Endothelial cell of umbilical vein (primary cell): ENCODE measurements at regions of chr2 and their contacts with region 1.

Region 1: DNA sequence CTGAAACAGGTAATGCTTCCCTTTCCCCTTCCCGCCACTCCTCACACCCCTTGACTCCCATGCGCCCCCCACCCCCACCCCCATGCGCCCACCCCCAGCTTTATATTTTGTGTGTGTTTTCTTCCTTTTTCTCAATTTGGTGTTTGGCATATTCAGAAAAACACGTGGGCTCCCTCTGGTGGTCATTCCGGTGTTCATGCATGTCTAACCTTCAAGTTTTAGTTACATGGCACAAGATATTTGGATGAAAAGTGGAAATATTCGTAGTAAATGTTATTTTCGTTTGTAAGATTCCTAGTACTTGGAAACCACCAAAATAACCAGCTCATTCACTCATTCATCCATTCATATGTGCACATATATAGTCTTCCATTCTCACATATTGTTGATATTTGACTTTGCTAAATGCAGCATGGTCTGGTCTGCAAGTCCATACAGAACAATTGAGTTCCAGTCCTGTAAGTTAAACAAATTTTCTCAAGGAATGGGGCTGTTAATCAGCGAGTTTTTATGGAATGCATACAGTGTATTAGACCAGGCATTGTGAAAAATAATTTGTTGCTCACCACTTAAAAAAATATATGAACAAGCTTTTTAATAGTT is 143.6 kb upstream of the MAP3K20 start:
- DNase-seq: peak; percentile 81
- H3K4me3 ChIP-seq: peak overlapping the region in 1 of 3 experiments; percentile 25
- H3K27ac ChIP-seq: peak overlapping the region; percentile 94
- H3K4me1 ChIP-seq: peaks cover 39% of the 10 kb centered on the region
- H3K27me3 ChIP-seq: no peaks in the 10 kb centered on the region
- CTCF ChIP-seq: peak; percentile 39 to 62
- POLR2A ChIP-seq: no peak

Region 2: GRCh38 chr2:172555522-172556283 is 376.3 kb before region 1 on chr2 and contains the start of gene PDK1:
- CTCF ChIA-PET with region 1: no interaction called
- POLR2A ChIA-PET with region 1: no interaction called
- dilution Hi-C with region 1: no loop called
- intact Hi-C with region 1: loop called (anchors 5 kb)
- DNase-seq: peak; percentile 90
- H3K4me3 ChIP-seq: peak within 1 kb of the TSS; percentile 11 to 53 (median 51)
- H3K27ac ChIP-seq: peak within 1 kb of the TSS; percentile 74
- H3K4me1 ChIP-seq: peaks cover 27% of the 10 kb centered on the region
- H3K27me3 ChIP-seq: no peaks in the 10 kb centered on the region
- CTCF ChIP-seq: no peak
- POLR2A ChIP-seq: peak; percentile 95
- total RNA-seq, gene PDK1: 7.7 and 16.9 TPM in 2 replicates

Region 3: GRCh38 chr2:172813314-172813888 is 118.6 kb before region 1 on chr2:
- CTCF ChIA-PET with region 1: interaction called, 280 read pairs
- POLR2A ChIA-PET with region 1: interaction called, 10 read pairs
- dilution Hi-C with region 1: no loop called
- intact Hi-C with region 1: loop called (anchors 1 kb)
- DNase-seq: peak; percentile 68
- H3K4me3 ChIP-seq: no peak overlapping the region
- H3K27ac ChIP-seq: no peak overlapping the region
- H3K4me1 ChIP-seq: no peaks in the 10 kb centered on the region
- H3K27me3 ChIP-seq: peaks cover 0 to 2% of the 10 kb centered on the region in 2 experiments
- CTCF ChIP-seq: peak in 1 of 2 donors; percentile 37
- POLR2A ChIP-seq: no peak

Region 4: DNA sequence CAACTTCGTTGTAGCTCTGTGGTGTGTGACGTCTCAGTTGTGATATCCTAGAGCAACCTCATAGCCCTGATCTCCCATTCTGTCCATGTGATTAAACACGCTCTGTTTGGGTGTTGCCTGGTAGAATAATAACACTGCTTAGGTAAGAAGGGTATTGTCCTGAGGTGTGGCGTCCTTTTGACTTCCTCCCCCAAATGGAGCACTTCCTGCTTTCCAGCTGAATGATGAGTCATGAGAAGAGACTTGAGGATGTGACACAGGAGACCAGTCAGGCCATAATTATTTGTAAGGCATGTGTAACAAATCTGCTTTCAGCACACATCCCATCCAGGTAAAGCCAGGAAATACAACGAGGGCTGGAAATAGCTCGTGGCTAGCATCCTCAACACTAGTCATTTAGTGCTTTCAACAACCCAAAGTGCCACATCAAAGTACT is 95.6 kb before region 1 on chr2:
- CTCF ChIA-PET with region 1: interaction called, 7 read pairs
- POLR2A ChIA-PET with region 1: no interaction called
- dilution Hi-C with region 1: no loop called
- intact Hi-C with region 1: loop called (anchors 1 kb)
- DNase-seq: peak; percentile 88
- H3K4me3 ChIP-seq: no peak overlapping the region
- H3K27ac ChIP-seq: peak overlapping the region; percentile 67
- H3K4me1 ChIP-seq: peaks cover 28% of the 10 kb centered on the region
- H3K27me3 ChIP-seq: no peaks in the 10 kb centered on the region
- CTCF ChIP-seq: no peak
- POLR2A ChIP-seq: no peak

Region 5: DNA sequence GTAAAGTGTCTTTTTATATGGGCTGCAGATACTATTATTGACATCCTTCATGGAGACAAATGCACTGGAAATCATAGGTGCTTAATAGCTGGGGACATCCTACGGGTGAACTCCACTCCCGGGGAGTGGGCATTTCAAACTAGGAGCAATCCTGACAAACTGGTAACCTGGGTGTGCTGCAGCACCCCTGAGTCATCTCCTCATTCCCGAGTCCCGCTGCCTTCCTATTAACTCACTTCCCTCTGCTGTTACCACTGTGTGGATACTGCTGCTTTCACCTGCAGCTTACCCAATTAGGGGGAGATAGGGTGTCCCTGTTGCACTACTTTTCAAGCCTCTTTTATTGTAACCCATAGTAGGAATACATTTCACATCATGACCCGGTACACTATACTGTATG is 62.2 kb before region 1 on chr2:
- CTCF ChIA-PET with region 1: interaction called, 91 read pairs
- POLR2A ChIA-PET with region 1: no interaction called
- dilution Hi-C with region 1: no loop called
- intact Hi-C with region 1: no loop called
- DNase-seq: no peak
- H3K4me3 ChIP-seq: no peak overlapping the region
- H3K27ac ChIP-seq: no peak overlapping the region
- H3K4me1 ChIP-seq: no peaks in the 10 kb centered on the region
- H3K27me3 ChIP-seq: no peaks in the 10 kb centered on the region
- CTCF ChIP-seq: no peak
- POLR2A ChIP-seq: no peak

Region 6: DNA sequence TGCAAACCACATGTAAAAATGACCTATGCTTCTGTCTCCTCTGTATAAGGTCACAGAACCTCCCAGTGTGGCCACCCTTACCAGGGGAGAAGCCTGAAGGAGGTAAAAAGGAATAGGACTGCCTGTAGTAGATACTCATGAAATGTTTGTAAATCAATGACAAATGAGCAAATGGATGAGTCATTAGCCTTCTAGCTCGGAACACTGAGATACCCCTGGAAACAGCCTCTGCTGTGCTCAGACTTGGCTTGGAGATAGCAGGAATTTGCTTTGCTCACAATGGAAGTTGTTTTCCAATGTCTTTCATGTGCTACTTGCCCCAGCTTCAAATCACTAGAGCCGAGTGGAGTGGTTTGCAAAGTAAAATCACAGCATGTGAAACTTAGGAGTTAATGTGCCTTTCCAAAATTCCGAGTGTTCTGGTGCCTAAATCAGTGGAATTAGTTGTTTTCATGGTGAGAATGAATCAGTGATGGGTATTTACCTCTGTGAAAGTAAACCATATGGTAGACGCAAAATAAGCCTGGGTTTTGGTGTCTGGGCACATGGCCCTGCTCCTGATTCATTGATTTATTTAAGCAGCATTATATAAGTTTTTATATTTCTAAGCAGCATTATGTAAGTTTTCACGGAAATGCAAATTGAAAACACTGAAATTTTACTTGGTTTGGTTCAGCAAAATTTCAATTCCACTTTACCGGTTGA is 10.3 kb before region 1 on chr2:
- CTCF ChIA-PET with region 1: interaction called, 33 read pairs
- POLR2A ChIA-PET with region 1: no interaction called
- dilution Hi-C with region 1: no loop called
- intact Hi-C with region 1: no loop called
- DNase-seq: peak; percentile 48
- H3K4me3 ChIP-seq: no peak overlapping the region
- H3K27ac ChIP-seq: no peak overlapping the region
- H3K4me1 ChIP-seq: peaks cover 2% of the 10 kb centered on the region
- H3K27me3 ChIP-seq: no peaks in the 10 kb centered on the region
- CTCF ChIP-seq: no peak
- POLR2A ChIP-seq: no peak

Region 7: DNA sequence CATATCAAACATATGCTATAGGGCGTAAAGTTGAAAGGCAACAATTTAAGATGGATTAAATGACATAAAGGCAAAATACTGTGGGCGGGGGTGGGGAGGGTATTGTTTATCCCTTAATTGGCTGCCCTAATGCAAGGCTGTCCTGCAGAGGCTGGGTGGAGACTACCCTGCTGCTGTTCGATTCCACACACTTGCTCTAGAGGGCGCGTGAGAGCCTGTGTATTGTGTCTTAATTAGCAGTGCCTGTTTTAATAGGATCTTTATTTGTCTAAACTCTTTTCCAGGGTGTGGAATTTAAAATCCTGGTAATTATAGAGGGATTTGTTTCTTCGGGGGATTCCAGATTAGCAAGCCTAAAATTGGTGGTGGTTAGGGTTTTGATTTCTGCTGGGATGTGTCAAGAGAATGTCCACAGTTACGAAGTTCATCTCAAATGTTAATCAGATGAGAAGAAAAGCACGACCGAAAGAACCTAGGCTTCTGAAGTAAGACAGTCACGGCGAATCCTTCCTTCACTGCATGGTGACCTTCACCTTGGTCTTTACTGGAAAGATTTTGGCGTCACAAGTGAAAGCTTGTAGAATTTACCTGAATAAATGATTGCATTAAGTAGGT is 40.1 kb after region 1 on chr2:
- CTCF ChIA-PET with region 1: interaction called, 54 read pairs
- POLR2A ChIA-PET with region 1: no interaction called
- dilution Hi-C with region 1: no loop called
- intact Hi-C with region 1: loop called (anchors 1 kb)
- DNase-seq: peak; percentile 54
- H3K4me3 ChIP-seq: no peak overlapping the region
- H3K27ac ChIP-seq: no peak overlapping the region
- H3K4me1 ChIP-seq: peaks cover 38% of the 10 kb centered on the region
- H3K27me3 ChIP-seq: no peaks in the 10 kb centered on the region
- CTCF ChIP-seq: peak; percentile 74 to 80
- POLR2A ChIP-seq: no peak

Region 8: GRCh38 chr2:174259981-174260380 is 1328.0 kb after region 1 on chr2:
- CTCF ChIA-PET with region 1: no interaction called
- POLR2A ChIA-PET with region 1: no interaction called
- dilution Hi-C with region 1: no loop called
- intact Hi-C with region 1: no loop called
- DNase-seq: no peak
- H3K4me3 ChIP-seq: no peak overlapping the region
- H3K27ac ChIP-seq: no peak overlapping the region
- H3K4me1 ChIP-seq: peaks cover 6% of the 10 kb centered on the region
- H3K27me3 ChIP-seq: no peaks in the 10 kb centered on the region
- CTCF ChIP-seq: no peak
- POLR2A ChIP-seq: no peak